ENCODE measurements at regions of chr1 and their contacts with region 1.

Region 1: DNA sequence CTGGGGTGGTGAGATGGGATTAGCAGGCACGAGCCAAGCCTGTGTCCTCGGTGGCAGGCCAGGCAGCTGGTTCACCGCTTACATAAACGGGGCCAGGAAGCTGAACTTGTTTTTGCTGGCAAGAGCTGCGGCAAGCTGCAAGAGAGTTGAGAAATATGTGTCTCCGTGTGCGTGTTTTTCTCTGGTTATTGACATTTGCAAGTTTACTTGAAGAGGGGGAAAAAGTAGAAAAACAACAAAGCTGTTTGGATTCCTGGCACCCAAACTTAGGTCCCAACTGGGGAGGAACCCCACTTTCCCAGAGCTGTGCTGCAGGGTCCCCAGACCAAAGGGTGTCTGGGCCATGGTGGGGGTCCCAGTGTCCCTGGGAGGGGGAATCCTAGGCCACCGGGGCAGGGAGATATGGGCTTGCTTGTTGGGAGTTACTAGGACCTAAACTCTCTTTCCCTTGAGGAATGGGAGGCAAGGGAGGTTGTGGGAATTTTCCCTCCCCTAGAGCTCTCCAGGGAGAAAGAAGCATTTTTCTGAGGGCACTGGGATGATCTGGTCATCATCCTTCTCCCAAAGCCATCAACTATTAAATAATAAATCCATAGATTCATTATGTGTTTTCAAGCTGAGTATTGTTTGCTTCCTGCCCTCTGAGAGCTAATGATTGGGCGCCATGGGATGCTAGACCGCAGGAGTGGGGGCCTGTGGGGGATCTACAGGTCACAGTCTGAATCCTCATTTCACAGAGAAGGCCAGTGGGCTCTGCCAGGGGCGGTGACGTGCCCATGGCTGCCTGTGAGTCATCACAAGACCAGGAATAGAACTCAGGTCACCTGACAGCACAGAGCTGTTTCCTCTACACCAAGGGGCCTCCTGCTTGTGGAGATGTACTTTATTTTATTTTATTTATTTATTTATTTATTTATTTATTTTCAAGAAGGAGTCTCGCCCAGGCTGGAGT is 14.8 kb downstream of the IL6R start:
- DNase-seq: peak; percentile 83
- ATAC-seq: peak; percentile 62
- H3K4me3 ChIP-seq: peak overlapping the region; percentile 2 to 68 (median 20); a peak in 5 of 6 replicates
- H3K27ac ChIP-seq: peak overlapping the region; percentile 85
- H3K4me1 ChIP-seq: peaks cover 83% of the 10 kb centered on the region
- H3K27me3 ChIP-seq: no peaks in the 10 kb centered on the region
- CTCF ChIP-seq: 0 out of 2 replicates have a peak, but pooled peaks have one; percentile 4
- EP300 ChIP-seq: peak in 1 of 2 experiments; percentile 81; a peak in 2 of 4 replicates
- POLR2A ChIP-seq: peak in 1 of 2 experiments; percentile 52; a peak in 2 of 4 replicates
- RAD21 ChIP-seq: no peak

Region 2: DNA sequence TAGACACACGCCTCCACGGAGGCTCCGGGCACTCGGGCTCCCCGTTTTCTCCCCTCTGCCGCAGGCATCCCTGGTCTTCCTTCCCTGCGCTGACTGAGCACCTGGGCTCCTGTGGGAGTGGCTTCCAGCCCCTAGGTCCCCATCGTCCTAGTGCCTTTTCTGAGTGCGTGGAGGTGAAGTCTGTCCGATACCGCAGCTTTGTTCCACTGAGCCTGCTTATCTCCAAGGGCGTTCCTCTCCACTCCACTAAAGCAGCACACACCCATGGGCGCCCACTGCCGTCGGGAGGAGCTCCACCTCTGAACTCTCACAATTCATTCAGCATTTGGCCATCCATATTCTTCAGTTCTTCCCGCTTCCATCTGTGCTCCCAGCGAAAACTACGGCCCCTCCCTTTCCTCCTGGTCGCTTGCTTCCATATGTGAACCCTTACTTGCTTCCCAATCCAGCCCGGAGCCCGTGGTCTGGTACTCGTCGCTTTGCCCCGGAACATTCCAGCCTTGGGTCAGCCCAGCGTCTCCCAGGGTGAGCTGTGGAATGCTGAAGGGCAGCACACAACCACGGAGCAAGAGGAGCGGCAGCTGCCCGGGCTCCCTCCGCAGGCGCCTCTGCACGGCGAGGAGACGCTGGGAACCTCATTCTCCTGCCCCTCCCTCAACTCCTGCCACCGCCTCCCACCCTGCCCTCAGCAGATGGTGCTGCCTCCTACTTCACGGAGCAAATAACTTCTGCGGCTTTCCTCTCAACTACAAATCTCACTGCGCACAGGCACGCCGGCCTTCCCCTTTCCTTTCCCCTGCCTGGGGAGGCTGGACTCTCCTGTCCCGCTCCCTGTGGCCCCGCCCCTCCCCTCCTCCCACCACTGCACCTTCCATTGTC is 67.1 kb before region 1 on chr1:
- CTCF ChIA-PET with region 1: no interaction called
- POLR2A ChIA-PET with region 1: interaction called, 13 read pairs
- in situ Hi-C with region 1: no loop called
- intact Hi-C with region 1: no loop called
- DNase-seq: no peak
- ATAC-seq: peak; percentile 70
- H3K4me3 ChIP-seq: peak overlapping the region; percentile 52 to 75 (median 55)
- H3K27ac ChIP-seq: no peak overlapping the region
- H3K4me1 ChIP-seq: peaks cover 52% of the 10 kb centered on the region
- H3K27me3 ChIP-seq: peaks cover 0 to 4% of the 10 kb centered on the region in 2 experiments; a peak in 1 of 5 replicates
- CTCF ChIP-seq: peak; percentile 33
- EP300 ChIP-seq: no peak
- POLR2A ChIP-seq: no peak
- RAD21 ChIP-seq: no peak

Region 3: DNA sequence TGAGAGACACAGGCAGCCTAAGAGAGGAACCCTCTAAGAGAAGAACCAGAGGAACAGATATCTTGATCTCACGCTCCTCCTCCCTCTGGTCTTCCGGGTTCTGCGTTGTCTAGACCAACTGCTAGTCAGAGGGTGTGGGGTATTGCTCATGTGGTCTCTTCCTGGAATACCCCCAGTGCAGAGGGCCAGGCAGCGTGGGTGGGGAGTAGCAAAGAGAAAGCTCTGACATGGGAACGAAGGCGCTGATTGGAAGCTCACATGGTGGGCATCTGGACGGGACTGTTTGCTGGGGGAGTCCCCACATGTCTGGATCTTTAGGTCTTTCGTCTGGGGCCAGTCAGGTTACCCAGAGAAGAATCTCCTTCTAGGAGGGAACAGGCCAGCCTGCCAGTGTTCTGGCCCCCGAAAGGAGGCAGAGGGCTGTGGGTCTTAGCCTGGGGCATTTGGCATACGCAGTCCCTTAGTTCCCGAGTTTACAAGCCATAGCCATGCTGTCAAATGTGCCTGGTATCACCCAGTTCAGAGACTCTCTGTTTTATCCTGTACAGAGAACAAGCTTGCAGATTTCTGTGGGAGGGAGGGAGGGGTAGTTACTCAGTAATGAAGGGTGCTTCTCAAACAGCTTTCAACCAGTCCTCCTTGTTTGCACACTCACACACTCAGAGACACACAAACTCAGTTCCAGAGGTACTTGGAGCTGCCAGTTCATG is 33.1 kb before region 1 on chr1:
- CTCF ChIA-PET with region 1: no interaction called
- POLR2A ChIA-PET with region 1: interaction called, 48 read pairs
- in situ Hi-C with region 1: no loop called
- intact Hi-C with region 1: no loop called
- DNase-seq: peak; percentile 77
- ATAC-seq: peak; percentile 95
- H3K4me3 ChIP-seq: peak overlapping the region; percentile 48 to 77 (median 51)
- H3K27ac ChIP-seq: peak overlapping the region; percentile 24
- H3K4me1 ChIP-seq: peaks cover 35% of the 10 kb centered on the region
- H3K27me3 ChIP-seq: no peaks in the 10 kb centered on the region
- CTCF ChIP-seq: no peak
- EP300 ChIP-seq: no peak
- POLR2A ChIP-seq: peak in 1 of 2 experiments; percentile 37; a peak in 1 of 4 replicates
- RAD21 ChIP-seq: no peak

Region 4: DNA sequence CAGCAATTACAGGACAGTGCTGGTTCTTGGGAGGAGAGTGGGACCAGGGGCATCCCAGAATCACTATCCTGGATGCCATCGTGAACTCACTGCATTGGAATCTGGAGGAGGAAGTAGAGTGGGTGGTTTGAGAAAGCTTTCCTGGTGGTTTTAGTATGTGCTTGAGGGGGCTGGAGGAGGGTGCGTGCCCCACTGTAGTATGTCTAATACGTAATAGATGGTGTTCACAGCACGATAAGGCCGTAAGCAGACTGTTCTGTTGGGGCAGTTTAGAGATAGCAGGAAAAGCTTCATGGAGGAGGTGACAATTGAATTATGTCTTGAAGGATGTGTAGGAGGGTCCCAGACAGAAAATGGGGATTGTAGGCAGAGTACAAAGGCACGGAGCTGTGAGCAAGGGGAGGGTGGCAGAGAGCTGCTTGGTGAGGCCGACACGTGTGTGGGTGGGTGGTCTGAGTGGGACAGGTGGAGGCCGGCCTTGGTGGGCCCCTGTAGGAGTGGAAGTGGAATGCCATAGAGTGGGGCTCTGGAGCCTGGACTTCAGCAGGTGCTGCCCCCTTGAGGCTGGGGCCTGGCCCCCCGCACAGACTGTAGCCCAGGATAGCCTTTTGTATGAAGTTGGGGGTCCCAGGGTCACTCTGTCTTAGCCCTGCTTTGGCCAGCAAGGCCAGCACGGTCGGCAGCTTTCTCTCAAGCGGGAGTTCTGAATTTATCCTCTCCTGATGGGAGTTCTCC is 22.3 kb after region 1 on chr1:
- CTCF ChIA-PET with region 1: no interaction called
- POLR2A ChIA-PET with region 1: interaction called, 22 read pairs
- in situ Hi-C with region 1: no loop called
- intact Hi-C with region 1: no loop called
- DNase-seq: no peak
- ATAC-seq: peak; percentile 85
- H3K4me3 ChIP-seq: no peak overlapping the region
- H3K27ac ChIP-seq: no peak overlapping the region
- H3K4me1 ChIP-seq: peaks cover 19% of the 10 kb centered on the region
- H3K27me3 ChIP-seq: no peaks in the 10 kb centered on the region
- CTCF ChIP-seq: peak; percentile 66
- EP300 ChIP-seq: no peak
- POLR2A ChIP-seq: no peak
- RAD21 ChIP-seq: peak; percentile 41; the same call in 1 of the 2 replicates

Region 5: GRCh38 chr1:154533952-154534844 is 114.3 kb after region 1 on chr1:
- CTCF ChIA-PET with region 1: no interaction called
- POLR2A ChIA-PET with region 1: no interaction called
- in situ Hi-C with region 1: no loop called
- intact Hi-C with region 1: no loop called
- DNase-seq: peak; percentile 59
- ATAC-seq: peak; percentile 82
- H3K4me3 ChIP-seq: no peak overlapping the region
- H3K27ac ChIP-seq: no peak overlapping the region
- H3K4me1 ChIP-seq: no peaks in the 10 kb centered on the region
- H3K27me3 ChIP-seq: no peaks in the 10 kb centered on the region
- CTCF ChIP-seq: peak; percentile 81
- EP300 ChIP-seq: no peak
- POLR2A ChIP-seq: no peak
- RAD21 ChIP-seq: peak; percentile 49; the same call in 1 of the 2 replicates

Measured in HepG2 (cell line).